Right ventricle myocardium superior (tissue), 1 donor: ENCODE measurements at regions of chr4 and their contacts with region 1.

Region 1: DNA sequence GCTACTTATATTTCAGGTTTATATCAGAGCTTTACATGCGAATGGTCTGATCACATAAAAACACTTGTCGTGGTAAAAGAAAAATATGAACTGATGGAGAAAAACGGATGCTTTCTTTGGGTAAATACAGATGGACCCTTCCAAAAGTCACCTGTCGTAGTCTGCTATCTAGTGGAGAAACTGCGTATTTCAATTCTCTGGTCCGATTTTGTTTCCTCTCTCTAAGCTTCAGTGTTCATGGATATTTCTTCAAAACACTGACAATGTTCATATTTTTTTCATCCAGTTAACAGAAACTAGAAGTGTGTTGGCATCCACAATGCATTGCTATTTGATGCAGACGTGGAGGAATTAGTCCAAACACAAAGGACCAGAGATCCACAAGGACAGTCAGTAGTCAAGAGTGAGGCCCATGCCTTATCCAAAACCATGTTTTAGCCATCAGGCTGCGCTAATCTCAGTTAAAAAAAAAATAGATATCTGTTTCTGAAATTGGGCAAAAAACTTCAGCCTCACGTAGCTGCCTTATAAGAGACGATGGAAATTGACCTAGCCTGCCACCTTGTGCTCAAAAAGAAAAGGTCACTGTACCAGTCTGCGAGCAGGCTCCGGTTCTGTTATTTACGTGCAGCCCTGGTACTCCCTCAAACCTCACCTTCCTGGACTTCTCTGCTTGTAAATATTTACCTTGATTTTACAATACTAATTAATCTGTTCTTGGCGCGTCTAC is 16.0 kb downstream of the MEPE start:
- DNase-seq: no peak
- ATAC-seq: peak; percentile 89

Region 2: DNA sequence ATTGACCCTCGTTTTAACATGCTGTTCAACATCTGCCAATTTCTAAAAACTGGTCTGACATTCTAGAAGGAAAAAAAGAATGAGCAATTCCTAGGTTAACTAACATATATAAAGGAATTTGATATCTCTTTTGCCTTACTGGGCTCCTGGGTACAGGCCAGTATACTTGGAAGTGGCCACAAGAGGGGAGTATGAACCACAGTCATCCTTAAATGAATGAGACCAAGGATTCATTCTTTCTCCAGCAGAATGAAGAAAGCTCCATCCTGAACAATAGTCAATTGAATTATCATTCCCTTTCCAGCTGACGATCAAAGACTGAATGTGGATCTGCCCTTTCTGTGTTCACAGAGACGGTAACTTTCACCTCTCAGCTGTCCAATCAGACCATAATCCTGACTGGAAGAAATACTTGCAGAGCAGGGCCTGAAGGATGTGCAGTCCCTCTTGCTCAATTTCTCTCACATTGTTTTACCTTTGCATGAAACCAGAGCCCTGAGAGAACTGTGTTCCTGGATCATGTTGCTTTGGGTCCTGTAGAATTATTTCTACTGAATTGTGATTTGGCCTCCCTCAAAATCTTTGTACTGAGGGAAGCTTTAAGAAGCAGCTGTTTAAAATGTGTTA is 304.8 kb before region 1 on chr4:
- intact Hi-C with region 1: loop called (anchors 5 kb)
- DNase-seq: no peak
- ATAC-seq: peak; percentile 38